Activated CD4-positive, alpha-beta memory T cell treated with anti-CD3 and anti-CD28 coated beads, Interleukin-2, amount 10 ng/mL, durations not matched to agents 7 days and 5 days (primary cell): ENCODE measurements at regions of chr17 and their contacts with region 1.

Region 1: DNA sequence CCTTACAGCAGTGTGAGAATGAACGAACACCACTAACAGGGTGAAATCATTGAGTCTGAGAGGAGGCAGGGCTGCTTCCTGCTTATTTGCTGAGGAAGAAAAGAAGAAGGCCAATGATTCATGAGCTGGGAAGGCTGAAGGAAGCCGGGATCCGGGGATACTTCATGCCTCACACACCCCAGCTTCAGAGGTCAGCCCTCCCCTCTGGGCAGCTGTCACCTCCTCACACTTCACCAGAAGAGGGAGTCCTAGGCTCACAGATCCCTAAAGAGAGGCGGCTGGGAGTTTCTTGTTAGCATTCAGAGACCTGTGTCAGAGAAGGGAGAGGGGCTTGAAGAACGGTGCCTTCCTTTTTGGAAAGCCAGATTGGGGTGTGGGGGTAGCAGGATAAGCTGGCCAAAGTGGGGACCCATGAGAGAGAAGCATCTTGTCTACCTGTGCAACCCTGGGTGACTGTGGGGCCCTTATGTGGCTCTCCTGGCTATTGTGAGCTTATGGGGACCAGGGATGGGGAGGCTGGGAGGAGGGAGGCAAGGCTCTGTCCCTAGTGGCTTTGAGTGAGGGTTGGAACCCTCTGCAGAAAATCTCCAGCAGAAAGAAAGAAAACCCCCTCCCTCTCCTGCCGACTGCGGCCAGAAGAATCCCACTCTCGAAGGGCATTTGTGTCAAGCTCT is 94.6 kb downstream of the RGS9 start:
- DNase-seq: peak; percentile 67
- H3K4me3 Mint-ChIP-seq: no peak overlapping the region
- H3K27ac Mint-ChIP-seq: no peak overlapping the region
- H3K4me1 Mint-ChIP-seq: peaks cover 61% of the 10 kb centered on the region
- H3K27me3 Mint-ChIP-seq: peaks cover 2% of the 10 kb centered on the region

Region 2: GRCh38 chr17:65173284-65173793 is 58.5 kb before region 1 on chr17:
- CTCF ChIA-PET with region 1: interaction called, 3 read pairs
- POLR2A ChIA-PET with region 1: interaction called, 10 read pairs
- DNase-seq: peak; percentile 94
- H3K4me3 Mint-ChIP-seq: no peak overlapping the region
- H3K27ac Mint-ChIP-seq: no peak overlapping the region
- H3K4me1 Mint-ChIP-seq: peaks cover 41% of the 10 kb centered on the region
- H3K27me3 Mint-ChIP-seq: no peaks in the 10 kb centered on the region

Region 3: GRCh38 chr17:65220732-65221131 is 11.1 kb before region 1 on chr17:
- CTCF ChIA-PET with region 1: interaction called, 14 read pairs
- POLR2A ChIA-PET with region 1: interaction called, 3 read pairs
- DNase-seq: no peak
- H3K4me3 Mint-ChIP-seq: no peak overlapping the region
- H3K27ac Mint-ChIP-seq: no peak overlapping the region
- H3K4me1 Mint-ChIP-seq: no peaks in the 10 kb centered on the region
- H3K27me3 Mint-ChIP-seq: peaks cover 17% of the 10 kb centered on the region

Region 4: DNA sequence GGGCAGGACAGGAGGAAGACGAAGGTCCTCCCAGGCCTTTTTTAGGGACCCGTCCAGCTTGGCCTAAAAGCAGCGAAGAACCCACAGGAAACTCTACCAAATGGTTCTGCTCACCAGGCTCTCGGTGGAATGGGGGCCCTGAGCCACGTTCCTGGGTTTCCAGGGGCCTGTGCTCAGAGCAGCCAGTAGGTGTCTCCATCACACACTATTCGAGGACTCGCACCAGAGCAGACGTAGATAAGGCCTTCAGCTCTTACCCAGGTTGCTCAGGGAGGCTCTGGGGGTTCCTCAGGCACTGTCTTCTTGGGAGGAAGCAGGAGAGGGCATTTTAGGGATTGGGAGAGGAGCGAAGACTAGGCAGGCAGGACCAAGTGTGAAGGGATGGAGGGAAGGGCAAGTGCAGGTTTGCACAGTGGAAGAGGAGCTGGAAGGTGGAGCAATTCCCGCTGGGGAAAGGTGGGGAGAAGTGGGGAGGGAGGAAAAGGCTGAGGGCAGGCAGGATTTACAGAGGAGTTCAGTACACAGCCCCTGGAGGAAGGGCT is 62.5 kb after region 1 on chr17:
- CTCF ChIA-PET with region 1: interaction called, 18 read pairs
- POLR2A ChIA-PET with region 1: no interaction called
- DNase-seq: peak; percentile 57
- H3K4me3 Mint-ChIP-seq: no peak overlapping the region
- H3K27ac Mint-ChIP-seq: no peak overlapping the region
- H3K4me1 Mint-ChIP-seq: no peaks in the 10 kb centered on the region
- H3K27me3 Mint-ChIP-seq: peaks cover 10% of the 10 kb centered on the region

Region 5: GRCh38 chr17:65556014-65556909 is 324.5 kb after region 1 on chr17:
- CTCF ChIA-PET with region 1: interaction called, 47 read pairs
- POLR2A ChIA-PET with region 1: interaction called, 5 read pairs
- DNase-seq: peak; percentile 88
- H3K4me3 Mint-ChIP-seq: no peak overlapping the region
- H3K27ac Mint-ChIP-seq: no peak overlapping the region
- H3K4me1 Mint-ChIP-seq: peaks cover 21% of the 10 kb centered on the region
- H3K27me3 Mint-ChIP-seq: peaks cover 18% of the 10 kb centered on the region

Region 6: DNA sequence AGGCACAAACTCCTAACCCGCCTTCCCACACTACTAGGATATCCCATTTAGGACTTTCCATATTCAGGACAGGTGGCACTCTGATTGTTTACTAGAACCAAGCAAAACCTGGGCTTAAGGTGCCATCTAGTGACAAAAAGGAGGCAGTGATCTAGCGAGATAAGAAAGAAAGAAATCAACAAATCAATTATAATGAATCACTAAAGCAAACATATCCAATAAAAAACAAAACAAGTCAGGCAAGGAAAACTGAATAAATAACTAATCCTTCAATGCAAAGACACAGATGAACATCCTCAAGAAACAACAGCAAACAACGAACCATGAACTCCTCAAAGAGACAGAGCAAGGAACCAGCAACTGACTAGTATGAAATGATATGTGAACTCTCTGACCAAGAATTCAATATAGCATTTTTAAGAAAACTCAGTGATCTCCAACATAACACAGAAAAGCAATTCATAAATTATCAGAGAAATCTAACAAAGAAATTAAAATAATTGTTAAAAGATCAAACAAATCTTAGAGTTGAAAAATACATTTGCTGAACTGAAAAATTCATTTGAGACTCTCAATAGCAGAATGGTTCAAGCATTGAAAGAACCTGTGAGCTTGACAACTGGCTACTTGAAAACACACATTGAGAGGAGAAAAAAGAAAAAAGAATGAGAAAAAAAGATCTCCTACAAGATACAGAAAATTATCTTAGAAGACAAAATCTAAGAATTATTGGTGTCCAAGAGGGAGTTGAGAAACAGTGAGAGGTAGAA is 756.5 kb after region 1 on chr17:
- CTCF ChIA-PET with region 1: interaction called, 12 read pairs
- POLR2A ChIA-PET with region 1: no interaction called
- DNase-seq: no peak
- H3K4me3 Mint-ChIP-seq: no peak overlapping the region
- H3K27ac Mint-ChIP-seq: no peak overlapping the region
- H3K4me1 Mint-ChIP-seq: no peaks in the 10 kb centered on the region
- H3K27me3 Mint-ChIP-seq: peaks cover 7% of the 10 kb centered on the region

Region 7: DNA sequence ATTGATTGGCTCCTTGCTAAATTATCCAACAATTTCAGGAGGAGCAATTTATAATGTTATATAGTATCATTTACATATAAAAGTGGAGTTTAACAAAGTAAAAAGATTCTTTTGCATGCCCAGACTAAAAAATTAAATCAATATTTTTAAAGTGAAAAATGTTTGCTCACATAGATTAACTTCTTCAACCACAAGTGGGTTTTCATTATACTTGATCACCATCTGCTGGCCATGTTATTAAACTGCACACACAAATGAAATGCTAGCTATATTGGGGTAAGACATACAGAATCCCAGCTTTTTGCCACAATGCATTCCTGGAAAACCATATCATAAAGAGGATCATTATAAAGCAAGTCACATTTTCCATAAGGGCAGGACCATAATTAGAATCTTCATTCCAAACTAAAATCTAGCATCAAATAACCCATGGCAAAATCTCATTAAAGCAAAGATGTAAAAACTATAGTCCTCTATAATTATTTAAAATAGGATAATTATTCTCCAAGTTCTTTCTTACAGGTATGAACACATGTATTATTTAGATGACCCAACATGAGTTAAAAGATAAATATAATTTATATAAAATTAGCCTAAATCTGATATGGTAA is 933.8 kb after region 1 on chr17:
- CTCF ChIA-PET with region 1: interaction called, 24 read pairs
- POLR2A ChIA-PET with region 1: interaction called, 9 read pairs
- DNase-seq: no peak
- H3K4me3 Mint-ChIP-seq: no peak overlapping the region
- H3K27ac Mint-ChIP-seq: no peak overlapping the region
- H3K4me1 Mint-ChIP-seq: peaks cover 9% of the 10 kb centered on the region
- H3K27me3 Mint-ChIP-seq: no peaks in the 10 kb centered on the region